Transverse colon (tissue), 4 donors: ENCODE measurements at regions of chr2 and their contacts with region 1.

Region 1: GRCh38 chr2:149597668-149598326 is 10.2 kb upstream of the MMADHC start:
- DNase-seq: peak; percentile 23
- H3K4me3 ChIP-seq: no peak overlapping the region
- H3K27ac ChIP-seq: no peak overlapping the region
- H3K4me1 ChIP-seq: peaks cover 0 to 4% (median 0%) of the 10 kb centered on the region in 4 donors
- H3K27me3 ChIP-seq: no peaks in the 10 kb centered on the region
- CTCF ChIP-seq: peak; percentile 77 to 83 (median 78)
- EP300 ChIP-seq: no peak
- POLR2A ChIP-seq: no peak

Region 2: GRCh38 chr2:149296031-149296430 is 301.8 kb before region 1 on chr2:
- in situ Hi-C with region 1: no loop called
- intact Hi-C with region 1: no loop called
- DNase-seq: no peak
- H3K4me3 ChIP-seq: no peak overlapping the region
- H3K27ac ChIP-seq: no peak overlapping the region
- H3K4me1 ChIP-seq: no peaks in the 10 kb centered on the region
- H3K27me3 ChIP-seq: no peaks in the 10 kb centered on the region
- CTCF ChIP-seq: no peak
- EP300 ChIP-seq: no peak
- POLR2A ChIP-seq: no peak

Region 3: DNA sequence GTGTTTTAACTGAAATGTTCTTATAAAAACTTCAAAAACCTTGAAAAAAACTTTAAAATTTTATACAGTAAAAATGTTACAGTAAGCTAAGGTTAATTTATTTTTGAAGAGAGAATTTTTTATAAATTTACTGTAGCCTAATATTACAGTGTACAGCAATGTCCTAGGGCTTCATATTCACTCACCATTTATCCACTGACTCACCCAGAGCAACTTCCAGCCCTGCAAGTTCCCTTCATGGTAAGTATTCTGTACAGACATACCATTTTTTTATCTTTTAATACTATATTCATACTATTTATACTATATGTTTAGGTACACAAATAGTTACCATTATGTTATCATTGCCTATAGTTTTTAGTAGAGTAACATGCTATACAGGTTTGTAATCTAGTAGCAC is 386.5 kb after region 1 on chr2:
- in situ Hi-C with region 1: no loop called
- intact Hi-C with region 1: no loop called
- DNase-seq: no peak
- H3K4me3 ChIP-seq: no peak overlapping the region
- H3K27ac ChIP-seq: no peak overlapping the region
- H3K4me1 ChIP-seq: no peaks in the 10 kb centered on the region
- H3K27me3 ChIP-seq: no peaks in the 10 kb centered on the region
- CTCF ChIP-seq: no peak
- EP300 ChIP-seq: no peak
- POLR2A ChIP-seq: no peak

Region 4: DNA sequence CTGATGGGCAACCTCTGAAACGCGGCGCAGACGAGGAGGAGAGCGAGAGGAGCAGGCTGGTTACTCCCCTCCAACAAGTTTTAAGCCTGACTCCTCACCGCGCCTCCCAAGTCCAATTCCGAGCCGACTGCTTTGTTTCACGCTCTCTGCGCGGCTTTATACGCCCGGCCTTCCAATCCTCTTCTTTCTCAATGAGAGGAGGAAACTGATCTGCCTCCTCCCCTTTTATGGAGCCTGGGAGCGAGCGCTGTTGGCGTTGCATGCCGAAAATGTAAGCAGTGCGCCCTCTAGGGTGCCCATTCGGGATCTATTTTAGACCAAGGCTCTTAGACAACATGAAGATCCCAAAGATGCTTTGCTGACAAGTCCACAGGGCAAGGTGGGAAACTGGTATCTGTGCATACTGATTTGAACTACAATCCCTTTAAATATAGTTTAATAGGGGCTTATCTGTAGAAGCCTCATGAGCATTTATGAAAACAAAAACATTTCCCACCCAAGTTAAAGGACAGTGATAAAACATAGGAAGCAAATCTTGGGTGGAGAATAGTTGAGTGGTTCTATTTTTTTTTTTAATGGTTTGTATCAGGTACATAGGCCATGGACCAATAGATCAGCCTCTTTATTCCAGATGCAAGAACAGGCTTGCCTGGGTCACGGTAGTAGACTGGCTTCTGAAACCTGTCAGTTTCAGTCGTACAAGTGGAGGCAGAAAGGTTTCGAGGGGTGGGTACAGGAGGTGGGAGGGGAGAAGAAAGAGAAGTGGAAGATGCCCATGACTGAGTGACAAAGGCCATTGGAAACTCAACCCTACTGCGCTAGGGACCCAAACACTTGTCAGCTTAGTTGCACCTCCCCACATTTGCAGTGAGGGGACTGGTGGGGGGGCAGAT is 890.0 kb after region 1 on chr2 and contains the start of gene RND3:
- in situ Hi-C with region 1: loop called (anchors 10 to 25 kb)
- intact Hi-C with region 1: loop called (anchors 5 kb)
- DNase-seq: peak; percentile 97
- H3K4me3 ChIP-seq: peak within 1 kb of the TSS; percentile 58 to 75 (median 69)
- H3K27ac ChIP-seq: peak within 1 kb of the TSS; percentile 93 to 96 (median 96)
- H3K4me1 ChIP-seq: peaks cover 6 to 24% (median 16%) of the 10 kb centered on the region in 4 donors
- H3K27me3 ChIP-seq: no peaks in the 10 kb centered on the region
- CTCF ChIP-seq: peak; percentile 74 to 93 (median 82)
- EP300 ChIP-seq: no peak
- POLR2A ChIP-seq: peak; percentile 98
- total RNA-seq, gene RND3: 16.5 to 54.6 (median 46.1) TPM

Region 5: DNA sequence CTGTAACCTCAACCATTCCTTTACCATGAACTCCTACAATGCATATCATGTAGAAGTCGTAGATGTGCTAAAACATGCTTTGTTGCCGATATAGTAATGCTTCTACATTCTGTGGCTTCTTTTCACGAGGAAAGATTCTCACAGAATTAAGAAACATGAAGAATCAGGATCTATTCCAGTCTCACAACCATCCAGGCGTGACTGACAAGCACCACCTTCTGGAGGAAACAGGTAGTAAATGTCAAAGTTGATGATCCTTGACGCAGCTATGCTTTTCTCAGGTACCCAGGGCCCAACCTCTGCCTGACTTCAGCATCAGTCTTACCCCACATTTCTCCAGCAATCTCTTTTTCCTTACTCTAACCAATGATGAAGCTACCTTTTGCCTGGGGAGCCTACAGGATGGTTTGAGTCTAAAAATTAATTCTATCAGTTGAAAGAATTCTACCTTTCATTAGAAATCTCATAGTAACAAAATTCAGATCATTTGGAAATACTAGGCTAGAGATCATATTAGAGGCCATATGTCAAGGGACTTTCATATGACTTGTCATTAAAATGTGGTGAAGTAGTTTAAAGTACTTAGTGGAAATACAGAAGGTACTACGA is 1013.0 kb after region 1 on chr2:
- in situ Hi-C with region 1: loop called in 2 of 4 experiments (anchors 10 to 25 kb)
- intact Hi-C with region 1: no loop called
- DNase-seq: peak; percentile 16
- H3K4me3 ChIP-seq: no peak overlapping the region
- H3K27ac ChIP-seq: no peak overlapping the region
- H3K4me1 ChIP-seq: peaks cover 0 to 6% (median 2%) of the 10 kb centered on the region in 4 donors
- H3K27me3 ChIP-seq: no peaks in the 10 kb centered on the region
- CTCF ChIP-seq: peak; percentile 39 to 64 (median 49)
- EP300 ChIP-seq: no peak
- POLR2A ChIP-seq: no peak

Region 6: DNA sequence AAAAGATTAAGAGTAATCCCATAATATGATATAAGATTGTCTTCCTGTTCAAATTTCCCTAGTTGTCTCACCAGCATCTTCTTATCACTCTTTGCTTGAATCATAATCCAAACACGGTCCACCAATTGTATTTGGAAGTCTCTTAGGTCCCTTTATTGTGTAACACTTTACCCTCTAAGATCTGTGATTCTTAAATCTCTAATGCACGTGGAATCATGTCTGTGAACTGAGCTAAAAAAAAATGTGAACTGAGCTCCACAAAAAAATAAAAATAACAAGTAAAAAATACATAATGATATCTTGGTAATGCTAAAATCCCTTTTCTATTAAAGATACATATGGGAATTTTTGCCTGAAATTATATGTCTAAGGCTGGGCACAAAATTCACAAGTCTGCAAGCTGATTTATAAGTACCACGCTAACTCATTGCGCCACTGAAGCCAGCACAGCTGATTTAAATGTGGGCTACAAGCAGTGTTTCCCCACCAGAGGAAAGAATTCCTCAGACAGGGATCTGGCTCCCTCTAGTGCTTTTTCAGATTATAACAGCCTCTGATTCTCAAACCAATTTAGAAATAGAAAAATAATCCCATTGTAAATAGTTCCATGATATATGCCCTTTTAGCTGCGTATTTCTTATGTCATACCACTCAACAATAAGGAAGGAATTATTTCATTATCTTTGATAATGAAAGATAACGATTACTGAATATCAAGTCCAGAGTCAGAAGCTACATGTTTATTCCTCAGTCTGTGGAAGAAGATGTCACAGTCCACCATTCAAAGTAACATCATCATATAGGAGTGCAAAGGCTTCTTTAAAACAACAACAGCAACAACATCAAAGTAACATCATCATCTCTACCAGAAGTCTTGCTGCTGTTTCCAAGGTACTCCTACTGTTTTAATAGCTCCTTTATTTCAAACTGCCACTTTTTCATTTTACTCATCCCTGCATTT is 1641.0 kb after region 1 on chr2:
- in situ Hi-C with region 1: loop called in 3 of 4 experiments (anchors 10 to 25 kb)
- intact Hi-C with region 1: loop called (anchors 10 kb)
- DNase-seq: peak; percentile 27
- H3K4me3 ChIP-seq: no peak overlapping the region
- H3K27ac ChIP-seq: no peak overlapping the region
- H3K4me1 ChIP-seq: peaks cover 0 to 6% (median 0%) of the 10 kb centered on the region in 4 donors
- H3K27me3 ChIP-seq: no peaks in the 10 kb centered on the region
- CTCF ChIP-seq: peak; percentile 60 to 84 (median 79)
- EP300 ChIP-seq: no peak
- POLR2A ChIP-seq: no peak

Region 7: DNA sequence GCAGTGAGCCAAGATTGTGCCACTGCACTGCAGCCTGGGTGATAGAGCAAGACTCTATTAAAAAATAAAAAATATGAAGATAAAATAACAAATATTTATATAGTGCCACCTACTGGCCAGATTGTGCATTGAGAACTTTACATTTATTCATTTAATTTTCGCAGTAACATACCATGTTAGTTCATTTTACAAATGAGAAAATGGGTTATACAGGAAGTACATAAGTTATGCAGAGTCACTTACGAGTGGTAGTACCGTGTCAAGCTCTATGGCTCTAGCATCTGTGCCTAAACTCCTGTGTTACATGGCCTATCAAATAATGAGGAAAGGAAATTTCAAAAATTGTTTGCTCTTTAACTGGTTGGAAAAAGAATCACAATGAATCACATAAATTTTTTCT is 1839.8 kb after region 1 on chr2:
- in situ Hi-C with region 1: loop called in 1 of 4 experiments (anchors 25 kb)
- intact Hi-C with region 1: no loop called
- DNase-seq: no peak
- H3K4me3 ChIP-seq: no peak overlapping the region
- H3K27ac ChIP-seq: peak overlapping the region; percentile 56 to 77 (median 72)
- H3K4me1 ChIP-seq: peaks cover 0 to 19% (median 12%) of the 10 kb centered on the region in 4 donors
- H3K27me3 ChIP-seq: no peaks in the 10 kb centered on the region
- CTCF ChIP-seq: peak; percentile 62 to 80 (median 74)
- EP300 ChIP-seq: no peak
- POLR2A ChIP-seq: no peak